CD4-positive, alpha-beta T cell (primary cell): ENCODE measurements at regions of chr1 and their contacts with region 1.

Region 1: DNA sequence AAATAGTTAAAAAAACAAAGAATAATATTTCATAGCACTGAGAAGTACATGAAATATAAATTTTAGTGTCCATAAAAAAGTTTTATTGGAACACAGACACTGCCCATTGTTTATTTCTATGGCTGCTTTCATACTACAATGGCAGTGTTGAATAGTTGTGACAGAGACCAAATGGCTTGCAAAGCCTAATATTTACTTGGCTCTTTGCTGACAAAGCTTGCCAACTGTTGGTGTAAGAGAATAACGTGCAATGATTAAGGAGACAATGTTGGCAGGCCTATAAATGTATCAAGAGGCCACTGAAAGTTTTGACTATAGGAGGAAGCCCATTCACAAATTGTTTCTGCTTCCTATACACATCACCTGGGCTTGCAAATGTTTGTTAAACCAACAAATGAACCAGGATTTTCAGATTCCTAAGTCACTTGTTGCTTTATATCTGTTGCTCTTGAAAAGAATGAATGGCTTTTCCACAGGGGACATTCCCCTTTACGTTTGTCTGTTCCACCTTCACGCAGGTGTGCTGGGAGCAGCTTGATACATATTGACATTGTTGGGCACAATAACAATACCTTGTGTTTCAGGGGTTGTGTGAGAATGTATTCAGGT is 5.5 kb upstream of the ST6GALNAC3 start:
- DNase-seq: no peak
- ATAC-seq: no peak
- H3K4me3 ChIP-seq: no peak overlapping the region
- H3K4me3 Mint-ChIP-seq: no peak overlapping the region
- H3K27ac ChIP-seq: no peak overlapping the region
- H3K27ac Mint-ChIP-seq: no peak overlapping the region
- H3K4me1 ChIP-seq: peaks cover 1% of the 10 kb centered on the region
- H3K4me1 Mint-ChIP-seq: peaks cover 2% of the 10 kb centered on the region
- H3K27me3 ChIP-seq: no peaks in the 10 kb centered on the region
- H3K27me3 Mint-ChIP-seq: peaks cover 9% of the 10 kb centered on the region
- CTCF ChIP-seq: no peak

Region 2: DNA sequence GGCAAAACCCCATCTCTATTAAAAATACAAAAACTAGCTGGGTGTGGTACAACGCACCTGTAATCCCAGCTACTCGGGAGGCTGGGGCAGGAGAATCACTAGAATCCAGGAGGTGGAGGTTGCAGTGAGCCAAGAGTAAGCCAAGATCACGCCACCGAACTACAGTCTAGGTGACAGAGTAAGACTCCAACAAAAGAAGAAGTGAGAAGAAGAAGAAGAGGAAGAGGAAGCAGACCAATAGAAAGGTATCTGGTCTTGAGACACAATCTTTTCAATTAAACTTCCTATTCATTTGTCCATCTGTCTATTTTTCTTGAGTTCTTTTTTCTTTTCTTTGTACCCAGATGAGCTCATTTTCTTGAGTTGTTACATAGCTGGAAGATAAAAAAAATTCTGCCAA is 400.2 kb before region 1 on chr1:
- CTCF ChIA-PET with region 1: no interaction called
- POLR2A ChIA-PET with region 1: no interaction called
- intact Hi-C with region 1: no loop called
- DNase-seq: no peak
- ATAC-seq: no peak
- H3K4me3 ChIP-seq: no peak overlapping the region
- H3K4me3 Mint-ChIP-seq: no peak overlapping the region
- H3K27ac ChIP-seq: no peak overlapping the region
- H3K27ac Mint-ChIP-seq: no peak overlapping the region
- H3K4me1 ChIP-seq: no peaks in the 10 kb centered on the region
- H3K4me1 Mint-ChIP-seq: no peaks in the 10 kb centered on the region
- H3K27me3 ChIP-seq: no peaks in the 10 kb centered on the region
- H3K27me3 Mint-ChIP-seq: peaks cover 2% of the 10 kb centered on the region
- CTCF ChIP-seq: no peak

Region 3: GRCh38 chr1:76083189-76083588 is 14.1 kb after region 1 on chr1:
- CTCF ChIA-PET with region 1: interaction called, 3 read pairs
- POLR2A ChIA-PET with region 1: no interaction called
- intact Hi-C with region 1: loop called in 1 of 2 experiments (anchors 1 kb)
- DNase-seq: no peak
- ATAC-seq: no peak
- H3K4me3 ChIP-seq: no peak overlapping the region
- H3K4me3 Mint-ChIP-seq: no peak overlapping the region
- H3K27ac ChIP-seq: no peak overlapping the region
- H3K27ac Mint-ChIP-seq: no peak overlapping the region
- H3K4me1 ChIP-seq: no peaks in the 10 kb centered on the region
- H3K4me1 Mint-ChIP-seq: no peaks in the 10 kb centered on the region
- H3K27me3 ChIP-seq: no peaks in the 10 kb centered on the region
- H3K27me3 Mint-ChIP-seq: no peaks in the 10 kb centered on the region
- CTCF ChIP-seq: no peak

Region 4: DNA sequence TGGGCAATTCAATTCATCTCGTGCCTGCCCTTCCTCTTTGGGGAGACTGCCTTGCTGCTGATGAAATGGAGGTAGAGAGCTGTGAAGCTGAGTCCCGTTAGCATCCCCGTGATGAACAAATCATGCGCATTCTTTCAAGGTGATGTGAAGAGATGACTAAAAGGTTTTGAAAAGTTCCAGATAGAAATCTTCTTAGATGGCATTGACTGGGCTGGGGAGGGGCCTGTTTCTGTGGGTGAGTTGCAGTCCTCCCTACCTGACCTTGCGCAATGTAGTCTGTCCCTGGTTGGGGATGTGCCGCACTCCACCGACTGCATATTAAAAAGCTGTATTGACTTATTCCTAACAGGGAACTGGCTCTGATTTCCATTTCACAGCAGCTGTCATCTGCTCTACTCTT is 55.1 kb after region 1 on chr1:
- CTCF ChIA-PET with region 1: no interaction called
- POLR2A ChIA-PET with region 1: no interaction called
- intact Hi-C with region 1: no loop called
- DNase-seq: no peak
- ATAC-seq: no peak
- H3K4me3 ChIP-seq: no peak overlapping the region
- H3K4me3 Mint-ChIP-seq: no peak overlapping the region
- H3K27ac ChIP-seq: no peak overlapping the region
- H3K27ac Mint-ChIP-seq: no peak overlapping the region
- H3K4me1 ChIP-seq: no peaks in the 10 kb centered on the region
- H3K4me1 Mint-ChIP-seq: no peaks in the 10 kb centered on the region
- H3K27me3 ChIP-seq: no peaks in the 10 kb centered on the region
- H3K27me3 Mint-ChIP-seq: no peaks in the 10 kb centered on the region
- CTCF ChIP-seq: no peak